GM12878 (cell line): ENCODE measurements at regions of chr14 and their contacts with region 1.

Region 1: GRCh38 chr14:61269321-61270083 is 11.6 kb downstream of the TMEM30B start:
- DNase-seq: peak; percentile 45
- ATAC-seq: peak; percentile 97
- H3K4me3 ChIP-seq: peak overlapping the region; percentile 49; the same call in 1 of the 2 replicates
- H3K27ac ChIP-seq: no peak overlapping the region
- H3K4me1 ChIP-seq: no peaks in the 10 kb centered on the region
- H3K27me3 ChIP-seq: peaks cover 0 to 5% of the 10 kb centered on the region in 2 experiments; a peak in 1 of 4 replicates
- CTCF ChIP-seq: peak; percentile 66 to 75 (median 74)
- EP300 ChIP-seq: no peak
- POLR2A ChIP-seq: no peak
- RAD21 ChIP-seq: peak; percentile 84

Region 2: GRCh38 chr14:61147831-61148549 is 121.5 kb before region 1 on chr14:
- CTCF ChIA-PET with region 1: no interaction called
- POLR2A ChIA-PET with region 1: no interaction called
- RAD21 ChIA-PET with region 1: no interaction called
- SMC1A ChIA-PET with region 1: no interaction called
- in situ Hi-C with region 1: no loop called
- intact Hi-C with region 1: no loop called
- DNase-seq: no peak
- ATAC-seq: no peak
- H3K4me3 ChIP-seq: no peak overlapping the region
- H3K27ac ChIP-seq: no peak overlapping the region
- H3K4me1 ChIP-seq: no peaks in the 10 kb centered on the region
- H3K27me3 ChIP-seq: no peaks in the 10 kb centered on the region
- CTCF ChIP-seq: no peak
- EP300 ChIP-seq: no peak
- POLR2A ChIP-seq: no peak
- RAD21 ChIP-seq: no peak

Region 3: GRCh38 chr14:61203081-61203753 is 66.3 kb before region 1 on chr14:
- CTCF ChIA-PET with region 1: no interaction called
- POLR2A ChIA-PET with region 1: no interaction called
- RAD21 ChIA-PET with region 1: no interaction called
- SMC1A ChIA-PET with region 1: no interaction called
- in situ Hi-C with region 1: no loop called
- intact Hi-C with region 1: no loop called
- DNase-seq: no peak
- ATAC-seq: no peak
- H3K4me3 ChIP-seq: no peak overlapping the region
- H3K27ac ChIP-seq: no peak overlapping the region
- H3K4me1 ChIP-seq: no peaks in the 10 kb centered on the region
- H3K27me3 ChIP-seq: peaks cover 0 to 3% of the 10 kb centered on the region in 2 experiments; a peak in 2 of 4 replicates
- CTCF ChIP-seq: no peak
- EP300 ChIP-seq: no peak
- POLR2A ChIP-seq: no peak
- RAD21 ChIP-seq: no peak

Region 4: DNA sequence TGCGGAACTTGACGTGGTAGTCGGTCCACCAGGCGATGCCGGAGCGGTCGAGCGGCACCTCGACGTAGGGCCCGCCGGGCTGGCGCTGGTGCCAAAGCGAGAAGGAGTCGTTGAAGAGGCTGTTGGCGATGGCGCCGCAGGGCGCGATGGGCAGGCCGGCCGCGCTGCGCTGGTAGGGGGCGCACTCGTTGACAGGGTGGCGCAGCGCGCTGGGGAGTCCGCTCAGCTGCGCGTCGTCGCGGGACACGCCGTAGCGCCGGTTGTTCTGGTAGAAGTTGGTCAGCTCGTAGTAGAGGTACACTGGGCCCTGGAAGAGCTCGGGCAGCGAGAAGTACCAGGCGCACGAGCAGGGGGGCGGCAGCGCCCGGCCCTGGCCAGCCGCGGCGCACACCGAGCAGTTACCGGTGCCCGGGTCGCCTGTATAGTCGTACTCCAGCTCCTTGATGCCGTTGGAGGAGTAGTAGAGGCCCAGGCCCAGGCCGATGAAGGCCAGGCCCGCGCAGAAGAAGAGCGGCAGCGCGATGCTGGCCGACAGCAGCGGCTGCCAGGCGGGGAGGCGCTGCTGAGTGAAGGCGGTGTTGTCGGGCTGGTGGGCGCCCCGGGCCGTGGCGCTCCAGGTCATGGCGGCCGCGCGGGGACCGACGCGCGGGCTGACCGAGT is 11.2 kb after region 1 on chr14:
- CTCF ChIA-PET with region 1: interaction called, 83 read pairs
- POLR2A ChIA-PET with region 1: no interaction called
- RAD21 ChIA-PET with region 1: interaction called, 8 read pairs
- SMC1A ChIA-PET with region 1: interaction called, 13 read pairs
- in situ Hi-C with region 1: no loop called
- intact Hi-C with region 1: no loop called
- DNase-seq: no peak
- ATAC-seq: peak; percentile 43
- H3K4me3 ChIP-seq: peak overlapping the region; percentile 50; the same call in 1 of the 2 replicates
- H3K27ac ChIP-seq: no peak overlapping the region
- H3K4me1 ChIP-seq: no peaks in the 10 kb centered on the region
- H3K27me3 ChIP-seq: peaks cover 2 to 20% of the 10 kb centered on the region in 2 experiments
- CTCF ChIP-seq: no peak
- EP300 ChIP-seq: no peak
- POLR2A ChIP-seq: no peak
- RAD21 ChIP-seq: no peak

Region 5: GRCh38 chr14:61287196-61287595 is 17.7 kb after region 1 on chr14:
- CTCF ChIA-PET with region 1: interaction called, 83 read pairs
- POLR2A ChIA-PET with region 1: no interaction called
- RAD21 ChIA-PET with region 1: interaction called, 8 read pairs
- SMC1A ChIA-PET with region 1: interaction called, 13 read pairs
- in situ Hi-C with region 1: no loop called
- intact Hi-C with region 1: loop called (anchors 1 kb)
- DNase-seq: no peak
- ATAC-seq: no peak
- H3K4me3 ChIP-seq: no peak overlapping the region
- H3K27ac ChIP-seq: no peak overlapping the region
- H3K4me1 ChIP-seq: no peaks in the 10 kb centered on the region
- H3K27me3 ChIP-seq: no peaks in the 10 kb centered on the region; a peak in 1 of 4 replicates
- CTCF ChIP-seq: no peak
- EP300 ChIP-seq: no peak
- POLR2A ChIP-seq: no peak
- RAD21 ChIP-seq: no peak